Activated CD4-positive, alpha-beta T cell treated with anti-CD3 and anti-CD28 coated beads, Interleukin-2, amount 10 ng/mL, durations not matched to agents 24 days and 14 days (primary cell): ENCODE measurements at regions of chr6 and their contacts with region 1.

Region 1: DNA sequence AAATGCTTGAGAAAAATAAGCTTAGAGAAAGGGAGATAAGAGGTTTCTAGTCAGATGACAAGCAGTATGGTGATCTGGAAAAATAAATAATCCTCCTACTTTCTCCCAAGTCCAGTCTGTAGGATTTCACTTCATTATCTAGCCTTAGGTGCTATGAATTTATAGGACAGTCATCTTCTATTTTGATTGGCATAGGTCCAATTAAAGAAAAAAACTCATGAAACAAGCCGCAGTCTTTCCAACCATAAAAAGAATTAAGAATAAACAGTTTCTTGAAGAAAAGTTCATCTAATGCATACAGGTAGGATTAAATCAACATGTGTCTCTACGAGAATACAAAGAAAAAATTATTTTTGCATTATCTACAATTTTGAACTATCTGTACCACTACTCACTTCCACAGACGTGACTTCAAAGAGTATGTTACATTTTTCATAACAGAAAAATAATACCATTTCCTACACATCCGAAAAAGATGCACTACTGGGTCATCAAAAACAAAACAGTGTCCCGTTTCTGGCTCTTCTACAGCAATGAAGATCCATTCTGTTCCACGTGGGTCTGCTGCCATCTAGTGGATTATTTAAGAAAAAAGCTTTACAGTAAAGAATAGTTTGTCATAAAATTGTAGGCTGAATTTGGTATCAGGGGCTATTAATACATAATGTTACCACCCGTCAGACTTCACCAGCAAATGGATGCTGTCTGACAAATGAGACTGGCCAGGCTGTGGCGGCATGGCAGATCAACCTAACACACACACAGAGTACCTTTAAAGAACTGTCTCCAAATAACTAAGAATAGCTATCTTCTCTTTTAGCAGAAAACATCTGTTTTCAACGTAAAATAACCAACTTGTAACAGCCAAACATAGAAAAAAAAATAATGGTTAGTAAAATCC is 28.9 kb downstream of the STX7 start:
- DNase-seq: peak; percentile 86
- H3K4me3 Mint-ChIP-seq: no peak overlapping the region
- H3K27ac Mint-ChIP-seq: no peak overlapping the region
- H3K4me1 Mint-ChIP-seq: peaks cover 10% of the 10 kb centered on the region
- H3K27me3 Mint-ChIP-seq: no peaks in the 10 kb centered on the region

Region 2: GRCh38 chr6:131914967-131915751 is 568.9 kb before region 1 on chr6:
- intact Hi-C with region 1: loop called (anchors 2 kb)
- DNase-seq: peak; percentile 85
- H3K4me3 Mint-ChIP-seq: no peak overlapping the region
- H3K27ac Mint-ChIP-seq: no peak overlapping the region
- H3K4me1 Mint-ChIP-seq: peaks cover 12% of the 10 kb centered on the region
- H3K27me3 Mint-ChIP-seq: peaks cover 36% of the 10 kb centered on the region

Region 3: DNA sequence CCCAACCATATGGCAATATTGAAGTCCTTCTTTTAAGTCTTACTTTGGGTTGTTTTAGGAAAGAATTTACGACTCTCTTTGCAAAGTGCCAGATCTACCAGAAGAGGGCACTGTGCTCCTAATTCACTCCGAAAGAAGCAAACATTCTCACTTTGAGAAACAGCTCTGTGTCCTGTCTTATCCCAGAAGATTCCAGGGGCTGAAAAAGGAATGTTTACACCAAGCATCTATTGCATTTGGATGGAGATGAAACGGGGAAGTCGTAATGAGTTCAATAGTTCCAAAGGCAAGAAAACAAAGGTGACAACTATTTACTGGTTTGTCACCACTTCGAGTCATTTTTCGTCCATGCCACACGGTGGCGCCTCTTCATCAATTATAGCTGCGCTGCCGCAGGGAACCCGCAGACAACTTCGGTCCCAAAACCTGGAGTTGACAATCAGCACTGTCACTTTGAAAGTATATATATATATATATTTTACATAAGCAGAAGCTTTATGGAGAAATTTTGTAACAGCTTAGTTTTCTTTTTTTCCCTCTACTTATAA is 204.4 kb before region 1 on chr6:
- intact Hi-C with region 1: loop called (anchors 1 kb)
- DNase-seq: peak; percentile 90
- H3K4me3 Mint-ChIP-seq: peak overlapping the region; percentile 83
- H3K27ac Mint-ChIP-seq: peak overlapping the region; percentile 74
- H3K4me1 Mint-ChIP-seq: peaks cover 2% of the 10 kb centered on the region
- H3K27me3 Mint-ChIP-seq: peaks cover 15% of the 10 kb centered on the region

Region 4: DNA sequence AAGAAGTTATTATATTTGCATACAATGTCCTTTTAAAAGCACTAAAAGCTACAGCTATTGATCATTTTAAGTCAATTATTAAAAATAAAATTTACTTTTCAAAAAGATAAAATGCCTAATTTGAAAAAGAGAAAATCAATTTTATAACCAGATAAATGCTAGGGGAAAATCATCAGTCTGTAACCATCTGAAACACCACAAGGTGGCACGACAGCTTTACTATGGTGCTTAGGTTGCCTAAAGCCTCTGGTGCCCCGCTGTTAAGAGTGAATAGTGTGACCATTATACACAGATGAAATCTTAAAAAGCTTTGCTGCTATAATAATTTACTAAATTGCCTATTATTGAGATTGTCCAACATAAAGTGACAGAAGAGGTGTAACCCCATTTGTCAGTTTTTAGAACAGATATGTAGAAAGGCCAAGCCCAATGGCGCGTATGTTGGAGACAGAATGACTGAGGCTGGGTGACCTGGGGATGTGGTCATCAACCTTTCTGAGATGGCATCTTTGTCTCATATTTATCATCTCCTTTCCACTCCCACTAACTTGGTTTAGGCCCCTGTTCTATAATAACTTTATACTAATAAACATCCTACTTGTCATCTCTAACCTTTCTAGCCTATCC is 183.6 kb before region 1 on chr6:
- intact Hi-C with region 1: loop called (anchors 1 kb)
- DNase-seq: peak; percentile 66
- H3K4me3 Mint-ChIP-seq: no peak overlapping the region
- H3K27ac Mint-ChIP-seq: no peak overlapping the region
- H3K4me1 Mint-ChIP-seq: no peaks in the 10 kb centered on the region
- H3K27me3 Mint-ChIP-seq: peaks cover 24% of the 10 kb centered on the region

Region 5: DNA sequence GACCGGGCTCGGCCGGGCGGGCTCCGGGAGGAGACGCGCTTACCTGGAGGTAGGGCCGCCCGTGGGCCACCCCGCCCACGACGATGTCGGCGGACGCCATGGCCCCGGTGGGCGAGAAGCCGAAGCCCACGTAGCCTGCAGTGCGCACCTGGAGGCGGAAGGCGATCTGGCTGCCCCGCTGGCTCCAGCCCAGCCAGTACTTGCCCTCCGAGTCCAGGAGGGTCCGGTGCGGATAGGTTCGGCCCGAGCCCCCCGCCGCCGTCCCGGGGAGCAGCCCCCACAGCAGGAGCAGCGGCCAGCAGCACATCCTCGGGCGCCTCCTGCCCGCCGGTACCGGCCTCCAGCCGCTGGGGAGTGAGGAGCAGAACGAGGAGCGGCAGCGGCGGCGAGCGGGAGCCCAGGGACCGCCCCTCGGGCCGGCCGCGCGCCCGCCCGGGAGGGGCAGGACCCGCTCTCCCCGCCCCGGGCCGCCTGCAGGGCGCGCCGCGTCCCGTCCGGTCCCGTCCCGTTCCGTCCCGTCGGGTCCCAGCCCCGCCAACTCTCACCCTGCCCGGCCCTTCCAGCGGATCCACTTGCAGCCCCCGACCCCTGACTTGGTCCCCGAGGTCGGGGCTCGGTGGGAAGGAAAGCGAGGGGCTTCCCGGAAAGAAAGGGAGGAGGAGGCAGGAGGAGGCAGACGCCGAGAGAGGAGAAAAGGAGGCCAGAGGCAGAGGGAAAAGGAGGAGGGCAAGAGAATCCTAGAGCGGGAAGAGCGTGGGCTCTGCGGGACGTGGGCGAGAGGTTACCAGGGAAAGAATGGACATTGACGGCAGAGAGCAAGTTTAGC is 82.7 kb before region 1 on chr6 and contains the start of gene MOXD1:
- intact Hi-C with region 1: loop called (anchors 5 kb)
- DNase-seq: no peak
- H3K4me3 Mint-ChIP-seq: peak within 1 kb of the TSS; percentile 48
- H3K27ac Mint-ChIP-seq: no peak within 1 kb of the TSS
- H3K4me1 Mint-ChIP-seq: peaks cover 11% of the 10 kb centered on the region
- H3K27me3 Mint-ChIP-seq: peaks cover 67% of the 10 kb centered on the region
- total RNA-seq, gene MOXD1: 0.12 TPM in 1 of 2 replicates, not detected in the other

Region 6: GRCh38 chr6:132465530-132466485 is 18.2 kb before region 1 on chr6:
- intact Hi-C with region 1: no loop called
- DNase-seq: no peak
- H3K4me3 Mint-ChIP-seq: no peak overlapping the region
- H3K27ac Mint-ChIP-seq: no peak overlapping the region
- H3K4me1 Mint-ChIP-seq: no peaks in the 10 kb centered on the region
- H3K27me3 Mint-ChIP-seq: no peaks in the 10 kb centered on the region